ENCODE measurements at regions of chr2 and their contacts with region 1.

Region 1: GRCh38 chr2:220687231-220687843 is 884.8 kb downstream of the EPHA4 start:
- DNase-seq: peak in 1 of 2 donors; percentile 82
- H3K4me3 ChIP-seq: no peak overlapping the region
- H3K27ac ChIP-seq: no peak overlapping the region
- H3K4me1 ChIP-seq: no peaks in the 10 kb centered on the region
- H3K27me3 ChIP-seq: no peaks in the 10 kb centered on the region
- CTCF ChIP-seq: peak; percentile 67 to 91 (median 84)

Region 2: GRCh38 chr2:219736209-219736608 is 951.1 kb before region 1 on chr2:
- intact Hi-C with region 1: loop called (anchors 10 kb)
- DNase-seq: no peak
- H3K4me3 ChIP-seq: no peak overlapping the region
- H3K27ac ChIP-seq: no peak overlapping the region
- H3K4me1 ChIP-seq: no peaks in the 10 kb centered on the region
- H3K27me3 ChIP-seq: no peaks in the 10 kb centered on the region
- CTCF ChIP-seq: peak in 2 of 3 experiments; percentile 46 to 56

Region 3: GRCh38 chr2:220188031-220188430 is 499.3 kb before region 1 on chr2:
- intact Hi-C with region 1: no loop called
- DNase-seq: no peak
- H3K4me3 ChIP-seq: no peak overlapping the region
- H3K27ac ChIP-seq: no peak overlapping the region
- H3K4me1 ChIP-seq: no peaks in the 10 kb centered on the region
- H3K27me3 ChIP-seq: no peaks in the 10 kb centered on the region
- CTCF ChIP-seq: no peak

Region 4: GRCh38 chr2:220586980-220587530 is 100.3 kb before region 1 on chr2:
- intact Hi-C with region 1: no loop called
- DNase-seq: no peak
- H3K4me3 ChIP-seq: no peak overlapping the region
- H3K27ac ChIP-seq: no peak overlapping the region
- H3K4me1 ChIP-seq: no peaks in the 10 kb centered on the region
- H3K27me3 ChIP-seq: no peaks in the 10 kb centered on the region
- CTCF ChIP-seq: no peak

Region 5: GRCh38 chr2:221203125-221203524 is 515.8 kb after region 1 on chr2:
- intact Hi-C with region 1: no loop called
- DNase-seq: no peak
- H3K4me3 ChIP-seq: no peak overlapping the region
- H3K27ac ChIP-seq: no peak overlapping the region
- H3K4me1 ChIP-seq: no peaks in the 10 kb centered on the region
- H3K27me3 ChIP-seq: no peaks in the 10 kb centered on the region
- CTCF ChIP-seq: no peak

Region 6: GRCh38 chr2:221429741-221430491 is 742.6 kb after region 1 on chr2:
- intact Hi-C with region 1: loop called (anchors 10 kb)
- DNase-seq: no peak
- H3K4me3 ChIP-seq: no peak overlapping the region
- H3K27ac ChIP-seq: peak overlapping the region in 1 of 2 donors; percentile 7
- H3K4me1 ChIP-seq: no peaks in the 10 kb centered on the region
- H3K27me3 ChIP-seq: no peaks in the 10 kb centered on the region
- CTCF ChIP-seq: no peak

Region 7: DNA sequence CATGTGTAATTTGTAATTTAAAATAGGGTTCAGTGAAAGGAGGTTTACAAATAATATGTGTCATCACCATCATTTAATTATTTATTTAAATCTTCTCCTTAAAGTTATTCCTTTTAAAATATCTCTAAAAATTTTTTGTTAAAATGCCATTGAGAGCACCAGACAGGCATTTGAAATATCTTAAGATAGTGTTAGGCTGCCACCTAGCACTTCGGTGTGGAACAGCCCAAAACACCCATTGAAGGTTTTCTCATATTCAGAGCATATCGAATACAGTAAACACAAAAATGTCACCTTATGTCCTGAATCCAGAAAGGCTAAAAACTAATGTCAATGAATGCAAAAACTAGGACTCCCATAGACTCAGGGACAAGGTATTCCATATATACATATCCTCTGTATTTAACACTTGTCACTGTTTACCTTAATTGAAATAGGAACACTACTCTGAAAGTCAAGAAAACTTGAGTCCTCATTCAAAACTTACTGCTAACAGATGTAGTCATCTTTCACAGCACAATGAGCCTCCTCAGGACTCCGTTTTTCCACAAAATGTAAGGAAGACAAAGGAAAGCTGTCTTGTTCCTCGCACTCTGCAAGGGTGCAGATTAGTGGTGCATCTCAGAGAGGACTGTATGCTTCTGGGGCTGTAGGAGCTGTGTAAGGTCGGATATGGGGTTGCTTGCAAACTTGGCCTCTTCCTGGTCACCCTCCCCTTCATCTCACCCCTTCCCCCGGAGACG is 1281.9 kb after region 1 on chr2:
- intact Hi-C with region 1: loop called (anchors 5 kb)
- DNase-seq: no peak
- H3K4me3 ChIP-seq: no peak overlapping the region
- H3K27ac ChIP-seq: no peak overlapping the region
- H3K4me1 ChIP-seq: no peaks in the 10 kb centered on the region
- H3K27me3 ChIP-seq: no peaks in the 10 kb centered on the region
- CTCF ChIP-seq: peak; percentile 15 to 66 (median 65)

Measured in ascending aorta (tissue), 2 donors.